Dendritic cell treated with granulocyte-macrophage colony-stimulating factor and Interleukin-4, amounts not matched to agents 40 ng/mL and 50 ng/mL, for 4 days (primary cell): ENCODE measurements at regions of chr2 and their contacts with region 1.

Region 1: DNA sequence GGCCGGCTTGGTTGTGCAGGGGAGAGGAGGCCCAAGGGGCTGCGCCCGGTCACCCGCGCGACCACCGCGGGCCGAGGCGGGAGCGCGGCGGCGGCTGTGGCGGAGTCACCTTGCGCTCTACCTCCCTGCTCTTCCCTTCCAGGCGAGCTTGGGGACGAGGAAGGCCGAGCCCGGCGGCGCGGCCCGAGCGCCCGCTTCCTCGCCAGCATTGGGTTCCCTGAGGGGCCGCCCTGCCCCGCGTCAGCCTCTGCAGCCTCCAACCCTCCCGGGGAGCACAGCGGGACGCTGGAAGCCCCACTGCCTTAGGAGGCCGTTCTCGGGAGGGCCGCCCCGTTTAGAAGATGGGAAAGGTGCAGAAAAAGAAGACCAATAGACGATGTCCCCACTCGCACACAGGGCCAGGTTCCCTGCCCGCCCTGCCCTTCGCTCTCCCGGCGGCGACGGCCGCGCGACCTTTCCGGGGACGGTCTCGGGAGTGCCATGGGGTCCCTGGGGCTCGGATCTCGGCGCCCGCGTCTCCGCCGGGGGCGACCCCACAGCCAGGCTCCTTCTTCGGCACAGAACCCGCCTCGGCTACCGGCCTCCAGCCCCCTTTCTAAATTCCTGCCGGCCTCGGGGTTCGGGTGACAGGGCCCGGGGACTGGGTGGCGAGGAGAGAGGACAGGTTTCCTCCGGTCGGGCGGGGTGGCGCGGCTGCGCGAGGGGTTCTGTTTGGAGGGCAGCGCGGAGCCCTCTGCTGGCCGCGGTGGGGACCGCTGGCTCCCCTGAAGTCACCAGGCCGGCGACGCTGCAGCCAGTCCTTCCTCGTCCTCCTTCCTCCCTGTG is 85.5 kb downstream of the HS6ST1 start:
- H3K4me3 Mint-ChIP-seq: peak overlapping the region; percentile 79
- H3K27ac Mint-ChIP-seq: peak overlapping the region; percentile 57
- H3K4me1 Mint-ChIP-seq: peaks cover 5% of the 10 kb centered on the region
- H3K27me3 Mint-ChIP-seq: peaks cover 22% of the 10 kb centered on the region

Region 2: GRCh38 chr2:128062571-128062970 is 170.6 kb before region 1 on chr2:
- intact Hi-C with region 1: loop called (anchors 5 kb)
- H3K4me3 Mint-ChIP-seq: no peak overlapping the region
- H3K27ac Mint-ChIP-seq: no peak overlapping the region
- H3K4me1 Mint-ChIP-seq: no peaks in the 10 kb centered on the region
- H3K27me3 Mint-ChIP-seq: no peaks in the 10 kb centered on the region

Region 3: GRCh38 chr2:128076461-128077106 is 156.6 kb before region 1 on chr2:
- intact Hi-C with region 1: no loop called
- H3K4me3 Mint-ChIP-seq: no peak overlapping the region
- H3K27ac Mint-ChIP-seq: no peak overlapping the region
- H3K4me1 Mint-ChIP-seq: peaks cover 5% of the 10 kb centered on the region
- H3K27me3 Mint-ChIP-seq: peaks cover 3% of the 10 kb centered on the region

Region 4: DNA sequence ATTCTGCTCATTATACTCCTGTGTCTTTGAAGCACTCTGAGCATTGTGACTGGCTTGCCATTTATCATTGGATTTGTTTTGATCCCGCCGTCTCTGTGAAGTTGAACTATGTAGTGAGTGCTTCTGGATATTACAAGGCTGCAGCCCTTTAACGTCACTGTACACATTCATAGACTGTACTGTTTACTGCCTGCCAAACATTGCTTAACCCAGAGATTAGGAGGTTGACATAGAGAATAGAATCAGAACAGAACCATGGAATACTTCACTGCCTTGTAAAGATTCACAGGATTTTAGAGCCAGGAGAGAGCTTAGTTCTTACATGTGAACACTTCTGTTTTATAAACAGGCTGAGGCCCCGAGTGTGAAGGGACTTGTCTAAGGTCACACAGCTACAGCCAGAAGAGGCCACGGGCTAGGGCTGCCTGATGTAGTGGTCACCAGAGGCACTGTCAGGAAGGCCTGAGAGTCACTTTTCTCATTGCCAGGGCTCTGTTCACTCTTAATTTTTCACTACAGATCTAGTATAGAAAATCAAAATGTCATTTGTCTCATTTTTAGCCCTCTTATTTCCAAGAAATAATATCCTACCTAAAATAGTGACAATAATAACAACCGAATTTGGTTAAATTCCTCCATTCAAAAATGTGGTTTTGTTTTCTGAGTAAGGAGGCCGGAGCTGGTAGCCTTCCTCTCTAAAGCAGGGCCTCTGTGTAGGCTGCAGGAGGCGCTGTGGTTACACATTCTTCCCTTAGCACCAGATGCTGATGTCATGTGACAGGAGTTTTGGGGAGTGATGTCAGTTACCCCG is 54.3 kb before region 1 on chr2:
- intact Hi-C with region 1: loop called (anchors 1 kb)
- H3K4me3 Mint-ChIP-seq: no peak overlapping the region
- H3K27ac Mint-ChIP-seq: no peak overlapping the region
- H3K4me1 Mint-ChIP-seq: peaks cover 5% of the 10 kb centered on the region
- H3K27me3 Mint-ChIP-seq: no peaks in the 10 kb centered on the region

Region 5: GRCh38 chr2:128379021-128380015 is 146.1 kb after region 1 on chr2:
- intact Hi-C with region 1: no loop called
- H3K4me3 Mint-ChIP-seq: no peak overlapping the region
- H3K27ac Mint-ChIP-seq: no peak overlapping the region
- H3K4me1 Mint-ChIP-seq: peaks cover 19% of the 10 kb centered on the region
- H3K27me3 Mint-ChIP-seq: peaks cover 16% of the 10 kb centered on the region

Region 6: DNA sequence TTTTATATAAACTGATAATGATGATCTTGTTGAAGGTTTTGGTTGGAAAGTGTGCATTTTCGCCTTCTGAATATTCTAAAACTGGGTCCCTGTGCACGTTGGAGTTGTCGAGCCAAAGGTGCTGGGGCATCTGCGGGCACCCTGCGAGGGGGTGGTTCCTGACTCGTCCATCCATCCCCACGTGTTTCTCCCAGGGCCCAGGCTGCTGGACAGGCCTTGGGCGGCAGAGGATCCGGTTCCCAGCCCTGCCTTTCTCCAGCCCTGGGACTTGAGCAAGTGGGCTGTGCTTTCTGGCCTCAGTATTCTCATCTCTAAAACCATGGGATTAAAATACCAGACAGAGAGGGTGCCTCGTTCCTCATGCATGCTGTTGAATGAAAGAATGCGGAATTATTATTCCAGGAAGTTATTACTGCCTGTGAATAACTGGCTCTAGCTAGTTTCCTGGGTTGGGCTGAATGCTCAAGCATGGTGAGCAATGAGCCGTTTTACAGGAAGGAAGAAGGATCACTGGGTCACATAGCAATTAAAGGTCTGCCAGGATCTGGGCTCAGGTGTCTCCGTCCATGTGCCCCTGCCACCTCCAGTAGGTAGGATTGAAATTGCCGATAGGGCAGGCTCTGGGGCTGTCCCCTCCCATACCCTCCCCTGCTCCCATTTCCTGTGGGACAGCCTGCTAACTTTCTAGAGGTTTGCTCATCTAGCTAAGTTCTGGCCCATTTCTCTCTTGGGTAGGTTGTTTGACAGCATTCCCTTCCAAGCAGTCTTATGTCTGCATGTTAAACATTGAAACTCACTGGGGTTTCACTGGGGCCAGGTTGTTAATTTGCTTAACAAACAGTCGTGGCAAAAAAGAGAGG is 162.7 kb after region 1 on chr2:
- intact Hi-C with region 1: no loop called
- H3K4me3 Mint-ChIP-seq: no peak overlapping the region
- H3K27ac Mint-ChIP-seq: no peak overlapping the region
- H3K4me1 Mint-ChIP-seq: peaks cover 7% of the 10 kb centered on the region
- H3K27me3 Mint-ChIP-seq: peaks cover 9% of the 10 kb centered on the region